Mammary epithelial cell (primary cell): ENCODE measurements at regions of chr9 and their contacts with region 1.

Region 1: DNA sequence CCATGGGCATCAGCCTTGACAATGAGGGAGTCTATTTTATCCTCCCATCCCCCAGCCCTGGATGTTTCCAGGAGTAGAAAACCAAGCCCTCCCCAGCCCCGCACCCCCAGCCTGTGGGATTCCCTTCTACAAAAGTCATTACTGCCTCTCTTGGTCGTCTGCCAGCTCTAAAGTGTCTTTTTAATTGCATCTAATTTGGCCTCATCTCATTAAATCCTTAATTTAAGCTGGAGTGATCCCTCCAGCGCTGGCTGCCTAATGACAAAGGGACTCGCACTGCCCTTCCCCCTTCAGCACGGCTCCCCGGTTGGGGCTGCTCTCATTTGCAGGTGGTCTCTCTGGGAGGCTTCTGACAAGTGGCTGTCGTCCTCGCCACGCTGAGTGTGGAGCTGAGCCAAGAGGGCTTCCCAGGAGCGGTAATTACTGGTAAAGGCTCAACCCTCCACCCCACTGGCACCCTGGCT is 107.9 kb upstream of the ALDH1B1 start:
- DNase-seq: no peak
- H3K4me3 ChIP-seq: no peak overlapping the region
- H3K27ac ChIP-seq: no peak overlapping the region
- H3K4me1 ChIP-seq: no peaks in the 10 kb centered on the region
- H3K27me3 ChIP-seq: no peaks in the 10 kb centered on the region
- CTCF ChIP-seq: no peak

Region 2: DNA sequence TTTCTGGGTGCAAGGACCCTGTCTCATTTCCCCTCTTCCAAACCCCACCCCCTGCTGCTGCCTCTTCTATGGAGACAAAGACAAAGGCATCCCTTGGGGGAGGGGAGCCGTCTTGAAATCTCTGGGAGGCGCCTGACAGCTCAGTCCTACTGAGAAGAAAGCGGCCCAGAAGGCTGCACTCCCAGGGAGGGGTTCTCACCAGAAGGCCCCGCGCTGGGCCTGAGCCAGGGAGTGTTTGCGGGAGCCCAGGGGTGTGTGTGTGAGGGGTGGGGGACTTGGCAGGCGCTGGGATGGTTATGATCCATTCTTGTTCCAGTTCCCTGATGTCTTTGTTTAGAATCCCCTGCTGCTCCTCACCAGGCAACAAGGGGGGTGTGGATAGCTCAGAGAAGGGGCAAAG is 62.2 kb after region 1 on chr9:
- CTCF ChIA-PET with region 1: no interaction called
- dilution Hi-C with region 1: loop called (anchors 5 kb)
- in situ Hi-C with region 1: no loop called
- intact Hi-C with region 1: no loop called
- DNase-seq: no peak
- H3K4me3 ChIP-seq: no peak overlapping the region
- H3K27ac ChIP-seq: no peak overlapping the region
- H3K4me1 ChIP-seq: no peaks in the 10 kb centered on the region
- H3K27me3 ChIP-seq: peaks cover 2% of the 10 kb centered on the region
- CTCF ChIP-seq: no peak